AG04449 (cell line): ENCODE measurements at regions of chr4 and their contacts with region 1.

Region 1: DNA sequence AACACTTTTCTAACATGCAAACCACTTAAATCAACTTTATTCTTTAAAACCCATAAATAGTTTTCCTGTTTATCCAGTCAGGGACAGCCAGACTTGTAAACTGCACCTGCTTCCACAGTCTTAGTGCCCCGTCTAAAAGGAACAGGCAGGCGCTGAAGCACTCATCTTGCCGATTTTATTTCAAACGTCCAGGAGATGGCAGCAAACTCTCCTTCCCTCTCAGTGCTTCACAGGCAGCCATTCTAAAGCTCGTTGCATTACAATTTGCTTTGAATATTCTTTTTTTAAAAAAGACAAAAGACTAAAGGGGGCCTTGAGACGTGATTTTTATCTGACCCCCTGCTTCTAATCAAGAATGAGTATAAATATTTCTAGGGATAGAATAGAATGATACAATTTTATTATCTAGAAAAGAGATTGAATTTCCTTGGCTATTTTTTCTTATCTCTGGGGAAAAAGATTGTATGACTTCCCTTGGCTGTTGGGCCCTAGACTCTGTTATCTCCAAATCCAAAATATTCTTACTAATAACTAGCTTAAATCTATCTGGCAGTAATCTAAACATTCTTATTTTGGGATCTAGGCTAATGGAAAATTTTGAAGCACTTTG is 93.6 kb upstream of the MYOZ2 start:
- DNase-seq: no peak
- H3K4me3 ChIP-seq: no peak overlapping the region
- CTCF ChIP-seq: peak; percentile 52

Region 2: GRCh38 chr4:118989098-118990080 is 52.7 kb before region 1 on chr4:
- CTCF ChIA-PET with region 1: interaction called, 125 read pairs
- POLR2A ChIA-PET with region 1: interaction called, 13 read pairs
- DNase-seq: peak; percentile 97
- H3K4me3 ChIP-seq: no peak overlapping the region
- CTCF ChIP-seq: no peak

Region 3: GRCh38 chr4:119031218-119031617 is 10.8 kb before region 1 on chr4:
- CTCF ChIA-PET with region 1: interaction called, 14 read pairs
- POLR2A ChIA-PET with region 1: interaction called, 4 read pairs
- DNase-seq: no peak
- H3K4me3 ChIP-seq: no peak overlapping the region
- CTCF ChIP-seq: no peak

Region 4: DNA sequence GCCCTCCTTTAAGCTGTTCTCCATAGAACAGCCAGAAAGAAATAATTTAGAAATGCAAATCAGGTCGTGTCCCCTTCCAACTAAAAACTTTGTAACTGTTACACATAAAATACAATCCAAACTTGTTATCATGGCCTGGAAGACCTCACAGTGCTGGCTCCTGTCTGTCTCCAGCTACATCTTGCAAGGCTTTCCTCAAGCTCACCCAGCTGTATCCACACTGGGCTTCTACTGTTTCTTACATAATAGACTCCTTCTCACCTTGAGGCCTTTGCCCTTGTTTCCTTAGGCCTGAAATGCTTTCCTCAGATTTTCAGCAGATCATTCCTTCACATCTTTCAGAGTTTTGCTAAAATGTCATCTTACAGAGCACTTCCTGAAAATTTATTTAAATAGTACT is 137.0 kb after region 1 on chr4:
- CTCF ChIA-PET with region 1: no interaction called
- POLR2A ChIA-PET with region 1: no interaction called
- DNase-seq: no peak
- H3K4me3 ChIP-seq: no peak overlapping the region
- CTCF ChIP-seq: no peak

Region 5: DNA sequence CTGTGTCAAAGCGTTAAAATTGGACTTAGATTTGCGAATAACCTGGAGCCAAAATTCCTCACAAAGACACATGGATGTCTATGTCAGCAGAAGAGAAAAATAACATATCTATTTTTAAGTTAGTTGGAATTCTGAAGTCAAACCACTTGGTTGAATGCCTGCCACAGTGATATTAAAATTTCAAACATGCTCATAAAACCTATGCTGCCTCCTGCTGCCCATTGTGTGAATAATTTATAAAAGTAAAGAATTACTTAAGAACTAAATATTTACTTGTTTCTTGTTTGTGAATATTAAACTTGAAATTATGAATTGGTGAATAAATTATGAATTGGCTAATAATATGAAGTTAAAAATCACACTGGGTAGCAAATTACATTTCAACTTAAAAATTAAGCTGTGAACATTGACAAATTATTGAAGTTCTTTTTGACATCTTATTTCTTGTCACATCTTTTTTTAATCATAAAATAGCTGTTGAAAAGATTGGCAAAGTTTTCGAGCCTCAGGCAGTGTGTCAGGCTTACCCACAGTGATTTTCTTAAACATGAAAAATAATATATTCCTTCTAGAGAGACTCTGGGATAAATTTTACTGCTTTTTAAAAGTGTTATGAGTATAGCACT is 244.4 kb after region 1 on chr4:
- CTCF ChIA-PET with region 1: interaction called, 63 read pairs
- POLR2A ChIA-PET with region 1: no interaction called
- DNase-seq: peak; percentile 50
- H3K4me3 ChIP-seq: no peak overlapping the region
- CTCF ChIP-seq: peak; percentile 25

Region 6: GRCh38 chr4:119678761-119679160 is 636.7 kb after region 1 on chr4:
- CTCF ChIA-PET with region 1: no interaction called
- POLR2A ChIA-PET with region 1: no interaction called
- DNase-seq: no peak
- H3K4me3 ChIP-seq: no peak overlapping the region
- CTCF ChIP-seq: no peak